ENCODE measurements at regions of chr16 and their contacts with region 1.

Region 1: DNA sequence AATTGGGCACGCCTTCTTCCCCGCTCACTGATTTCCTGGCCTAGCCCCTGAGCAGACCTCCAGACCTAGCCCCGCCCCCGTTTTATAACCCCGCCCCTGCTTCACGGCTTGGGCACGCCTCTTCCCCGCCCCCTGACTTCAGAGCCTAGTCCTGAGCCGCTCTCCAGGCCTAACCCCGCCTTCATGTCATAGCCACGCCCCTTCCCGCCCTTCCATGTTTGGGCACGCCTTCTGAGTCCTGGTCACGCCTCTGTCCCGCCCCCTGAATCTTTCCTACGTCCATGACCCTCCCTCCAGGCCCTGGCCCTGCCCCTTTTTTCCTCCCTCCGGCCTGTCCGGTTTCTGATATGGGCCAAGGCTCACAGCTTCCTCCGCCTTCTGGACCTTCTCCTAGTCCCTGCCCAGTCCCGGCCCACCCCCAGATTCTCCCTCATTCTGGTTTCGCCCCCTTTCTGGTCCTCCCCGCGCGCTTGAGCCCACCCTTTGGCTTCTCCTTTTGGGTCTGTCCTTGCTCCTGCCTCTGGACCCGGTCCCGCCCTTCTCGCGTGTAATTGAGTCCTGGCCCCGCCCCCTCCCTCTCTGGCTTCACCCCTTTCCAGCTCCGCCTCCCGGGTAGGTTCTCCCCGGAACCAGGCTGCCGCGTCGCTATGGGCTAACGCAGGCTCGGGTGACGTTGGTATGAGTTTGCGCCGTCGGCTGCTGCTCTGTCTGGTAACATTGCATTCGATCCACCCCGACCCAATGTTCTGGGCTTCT is 15.1 kb upstream of the EEF2K start:
- DNase-seq: peak; percentile 100
- H3K4me3 ChIP-seq: peak overlapping the region; percentile 35 to 87 (median 66)
- H3K27ac ChIP-seq: peak overlapping the region; percentile 90 to 96 (median 93)
- H3K4me1 ChIP-seq: peaks cover 0 to 36% (median 30%) of the 10 kb centered on the region in 4 donors
- H3K27me3 ChIP-seq: no peaks in the 10 kb centered on the region
- CTCF ChIP-seq: no peak
- EP300 ChIP-seq: no peak
- POLR2A ChIP-seq: peak; percentile 90 to 92

Region 2: DNA sequence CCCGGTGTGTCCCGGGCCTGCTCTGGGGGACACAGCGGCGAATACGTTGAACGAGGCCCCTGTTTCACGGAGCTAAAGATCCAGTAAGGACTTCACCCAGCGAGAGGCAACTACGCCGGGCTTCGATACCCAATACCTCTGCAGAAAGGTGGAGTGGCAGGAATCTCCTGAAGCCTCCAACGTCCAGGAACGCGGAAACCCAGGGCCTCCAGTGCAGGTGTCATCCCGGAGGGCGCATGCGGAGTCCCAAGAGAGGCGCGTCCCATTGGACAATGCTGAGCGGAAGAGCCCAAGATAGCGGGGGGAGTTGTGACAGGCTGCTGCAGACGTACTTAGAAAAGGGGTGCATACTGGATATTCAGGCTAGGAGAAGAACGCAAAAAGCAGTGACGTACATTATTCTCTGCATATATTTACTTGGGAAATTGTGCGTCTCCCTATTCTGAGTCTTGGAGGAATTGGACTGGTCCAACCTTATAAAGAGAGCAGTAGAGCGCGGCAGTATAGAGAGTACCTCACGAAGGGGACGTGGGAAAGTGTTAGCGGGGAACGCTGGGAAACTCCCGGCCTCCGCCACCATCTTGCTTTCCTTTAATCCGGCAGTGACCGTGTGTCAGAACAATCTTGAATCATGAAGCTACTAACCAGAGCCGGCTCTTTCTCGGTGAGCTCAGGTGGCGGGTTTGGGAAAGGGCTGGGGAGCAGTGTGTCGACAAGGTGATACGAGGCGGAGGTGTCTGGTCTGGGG is 238.0 kb before region 1 on chr16 and contains the start of gene UQCRC2:
- intact Hi-C with region 1: loop called (anchors 2 kb)
- DNase-seq: peak; percentile 93
- H3K4me3 ChIP-seq: peak within 1 kb of the TSS; percentile 78 to 91 (median 82)
- H3K27ac ChIP-seq: peak within 1 kb of the TSS; percentile 88 to 95 (median 90)
- H3K4me1 ChIP-seq: peaks cover 0 to 44% (median 36%) of the 10 kb centered on the region in 4 donors
- H3K27me3 ChIP-seq: no peaks in the 10 kb centered on the region
- CTCF ChIP-seq: no peak
- EP300 ChIP-seq: no peak
- POLR2A ChIP-seq: peak; percentile 59 to 90
- total RNA-seq, gene UQCRC2: 179 to 220 (median 205) TPM

Region 3: GRCh38 chr16:22001591-22001990 is 189.4 kb before region 1 on chr16:
- intact Hi-C with region 1: loop called (anchors 1 kb)
- DNase-seq: no peak
- H3K4me3 ChIP-seq: no peak overlapping the region
- H3K27ac ChIP-seq: no peak overlapping the region
- H3K4me1 ChIP-seq: peaks cover 0 to 10% (median 9%) of the 10 kb centered on the region in 4 donors
- H3K27me3 ChIP-seq: no peaks in the 10 kb centered on the region
- CTCF ChIP-seq: no peak
- EP300 ChIP-seq: no peak
- POLR2A ChIP-seq: no peak

Region 4: DNA sequence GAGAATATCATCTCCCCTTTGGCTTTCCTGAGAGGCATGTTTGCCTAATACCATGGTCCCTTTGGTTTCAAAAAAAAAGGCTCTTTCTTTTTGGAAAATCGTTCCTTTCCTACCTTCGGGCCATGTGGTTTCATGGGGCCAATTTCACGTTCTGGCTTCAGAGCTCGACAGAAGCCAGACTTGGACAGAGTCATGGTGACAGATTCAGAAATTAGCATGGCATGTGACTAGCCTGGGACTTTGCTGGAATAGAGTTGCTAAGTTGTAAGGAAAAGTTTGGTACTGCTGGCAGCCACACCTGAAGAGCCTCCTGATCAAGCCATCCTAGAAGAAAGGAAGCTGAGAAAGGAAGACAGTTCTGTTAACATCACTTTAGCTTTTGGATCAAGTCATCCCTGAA is 101.0 kb before region 1 on chr16:
- intact Hi-C with region 1: loop called (anchors 5 kb)
- DNase-seq: no peak
- H3K4me3 ChIP-seq: no peak overlapping the region
- H3K27ac ChIP-seq: no peak overlapping the region
- H3K4me1 ChIP-seq: peaks cover 0 to 13% (median 0%) of the 10 kb centered on the region in 4 donors
- H3K27me3 ChIP-seq: no peaks in the 10 kb centered on the region
- CTCF ChIP-seq: no peak
- EP300 ChIP-seq: no peak
- POLR2A ChIP-seq: no peak

Region 5: GRCh38 chr16:22264786-22265185 is 73.8 kb after region 1 on chr16:
- intact Hi-C with region 1: no loop called
- DNase-seq: no peak
- H3K4me3 ChIP-seq: no peak overlapping the region
- H3K27ac ChIP-seq: no peak overlapping the region
- H3K4me1 ChIP-seq: no peaks in the 10 kb centered on the region
- H3K27me3 ChIP-seq: no peaks in the 10 kb centered on the region
- CTCF ChIP-seq: no peak
- EP300 ChIP-seq: no peak
- POLR2A ChIP-seq: no peak

Region 6: GRCh38 chr16:22374311-22375116 is 183.6 kb after region 1 on chr16 and contains the start of gene CDR2:
- intact Hi-C with region 1: loop called (anchors 5 kb)
- DNase-seq: peak; percentile 99
- H3K4me3 ChIP-seq: peak within 1 kb of the TSS; percentile 78 to 95 (median 78)
- H3K27ac ChIP-seq: peak within 1 kb of the TSS; percentile 91 to 95 (median 94)
- H3K4me1 ChIP-seq: peaks cover 0 to 47% (median 43%) of the 10 kb centered on the region in 4 donors
- H3K27me3 ChIP-seq: no peaks in the 10 kb centered on the region
- CTCF ChIP-seq: no peak
- EP300 ChIP-seq: no peak
- POLR2A ChIP-seq: peak; percentile 81 to 91
- total RNA-seq, gene CDR2: 20.3 to 32.3 (median 24.4) TPM

Region 7: DNA sequence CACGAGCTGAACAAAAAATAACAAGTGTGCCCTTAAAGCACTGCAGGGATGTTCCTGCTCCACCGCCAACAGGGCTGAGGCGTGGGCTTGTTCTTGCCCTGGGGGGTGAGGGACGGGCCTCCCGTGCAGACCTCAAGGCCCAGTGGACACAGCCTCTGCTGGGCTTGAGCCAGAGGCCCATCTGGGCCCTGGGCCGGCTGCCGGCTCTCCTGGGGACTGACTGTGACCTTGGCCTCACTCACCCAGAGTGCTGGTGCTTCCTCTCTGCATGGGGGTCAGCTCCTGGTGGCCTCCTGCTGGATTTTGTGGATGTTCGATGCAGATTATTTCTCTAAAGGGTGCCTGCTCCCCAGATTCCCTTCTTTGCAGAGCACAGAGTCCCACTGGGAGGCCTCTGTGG is 237.7 kb after region 1 on chr16:
- intact Hi-C with region 1: no loop called
- DNase-seq: no peak
- H3K4me3 ChIP-seq: no peak overlapping the region
- H3K27ac ChIP-seq: no peak overlapping the region
- H3K4me1 ChIP-seq: peaks cover 0 to 16% (median 8%) of the 10 kb centered on the region in 4 donors
- H3K27me3 ChIP-seq: no peaks in the 10 kb centered on the region
- CTCF ChIP-seq: no peak
- EP300 ChIP-seq: no peak
- POLR2A ChIP-seq: no peak